Posterior vena cava (tissue), 2 donors: ENCODE measurements at regions of chr3 and their contacts with region 1.

Region 1: DNA sequence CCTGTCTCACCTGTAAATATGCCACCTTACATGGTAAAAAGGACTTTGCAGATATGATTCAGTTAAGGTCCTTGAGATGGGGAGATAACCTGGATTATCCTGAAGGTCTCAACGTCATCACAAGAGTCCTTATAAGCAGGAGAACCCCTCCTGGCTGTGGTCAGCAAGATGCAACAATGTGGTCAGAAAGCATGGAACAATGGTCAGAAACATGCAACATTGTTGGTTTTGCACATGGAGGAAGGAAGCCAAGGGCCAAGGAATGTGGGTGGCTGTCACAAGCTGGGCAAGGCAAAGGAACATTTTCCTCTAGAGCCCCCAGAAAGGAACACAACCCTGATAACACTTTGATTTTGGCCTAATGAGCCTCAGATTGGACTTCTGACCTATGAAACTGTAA is 9.4 kb upstream of the SUMF1 start:
- DNase-seq: no peak

Region 2: GRCh38 chr3:4426601-4427344 is 49.7 kb before region 1 on chr3:
- intact Hi-C with region 1: loop called in 1 of 2 experiments (anchors 1 kb)
- DNase-seq: no peak

Region 3: DNA sequence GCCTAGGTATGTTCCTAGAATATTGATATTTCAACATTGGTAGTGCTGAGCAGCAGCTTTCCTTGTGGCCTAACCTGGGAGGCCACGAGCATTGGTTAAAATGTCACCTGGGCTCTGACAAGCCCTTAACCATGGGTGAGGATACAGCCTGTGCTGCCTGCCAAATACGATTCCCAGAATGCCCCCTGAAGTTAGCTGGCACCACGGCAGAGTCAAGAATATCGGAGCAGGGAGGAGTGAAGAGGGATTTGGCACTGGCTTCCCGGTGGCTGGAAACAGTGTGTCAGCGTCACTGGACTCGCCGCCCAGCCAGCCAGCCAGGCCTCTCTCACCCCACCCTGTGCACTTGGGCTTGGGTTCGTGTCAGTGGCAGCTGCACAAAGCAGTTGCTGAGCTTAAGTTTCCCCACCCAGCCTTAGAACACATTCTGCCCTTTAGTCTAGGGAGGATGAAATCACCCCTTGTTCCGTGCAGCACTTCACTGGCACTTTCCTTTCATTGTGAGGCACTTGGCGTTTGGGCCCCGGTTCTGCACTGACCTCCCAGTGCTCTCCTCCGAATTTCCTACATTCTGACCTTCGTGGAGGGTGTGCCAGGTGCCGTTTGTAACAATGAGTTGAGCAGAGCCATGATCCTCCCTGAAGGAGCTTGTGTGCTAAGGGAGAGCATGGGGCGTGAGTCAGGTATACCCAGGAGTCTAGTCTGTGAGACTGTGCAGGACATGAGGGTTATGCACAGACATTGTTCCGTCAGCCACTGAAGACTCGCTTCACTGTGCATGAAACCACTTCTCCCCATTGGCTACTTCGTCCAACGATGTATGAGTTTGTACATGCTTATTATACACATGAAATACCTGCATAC is 350.0 kb after region 1 on chr3:
- intact Hi-C with region 1: no loop called
- DNase-seq: peak; percentile 97